Adrenal gland (tissue), 19 donors: ENCODE measurements at regions of chr11 and their contacts with region 1.

Region 1: DNA sequence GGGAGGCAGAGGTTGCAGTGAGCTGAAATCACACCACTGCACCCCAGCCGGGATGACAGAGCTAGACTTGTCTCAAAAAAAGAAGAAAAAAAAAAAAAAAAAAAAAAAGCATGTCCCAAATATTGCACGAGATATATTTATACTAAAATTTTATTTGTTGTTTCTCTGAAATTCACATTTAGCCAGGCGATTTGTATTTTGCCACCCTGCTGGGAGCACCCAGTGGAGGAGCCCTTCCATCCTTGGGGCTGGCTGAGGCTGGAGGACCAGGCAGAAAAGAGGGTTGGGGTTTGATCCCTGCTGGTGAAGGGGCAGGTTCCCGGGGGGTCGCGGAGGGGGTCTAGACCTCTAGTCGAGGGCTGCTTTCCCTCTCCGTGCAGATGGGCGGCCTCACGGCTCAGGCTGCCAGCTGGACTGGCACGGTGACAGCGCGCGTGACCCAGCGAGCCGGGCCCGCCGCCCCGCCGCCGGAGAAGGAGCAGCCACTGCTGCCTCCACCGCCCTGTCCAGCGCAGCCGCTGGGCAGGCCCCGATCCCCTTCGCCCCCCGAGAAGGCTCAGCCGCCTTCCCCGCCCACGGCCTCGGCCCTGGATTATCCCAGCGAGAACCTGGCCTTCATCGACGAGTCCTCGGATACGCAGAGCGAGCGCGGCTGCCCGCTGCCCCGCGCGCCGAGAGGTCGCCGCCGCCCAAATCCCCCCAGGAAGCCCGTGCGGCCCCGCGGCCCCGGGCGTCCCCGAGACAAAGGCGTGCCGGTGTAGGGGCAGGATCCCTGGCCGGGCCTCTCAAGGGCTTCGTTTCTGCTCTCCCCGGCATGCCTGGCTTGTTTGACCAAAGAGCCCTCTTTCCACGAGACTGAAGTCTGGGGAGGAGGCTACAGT is 952 bp upstream of the CATSPERZ start:
- DNase-seq: peak in 6 of 7 donors; percentile 62 to 75 (median 74)
- H3K4me3 ChIP-seq: peak overlapping the region in 2 of 4 donors; percentile 30 to 43
- H3K27ac ChIP-seq: no peak overlapping the region
- H3K4me1 ChIP-seq: peaks cover 23 to 30% of the 10 kb centered on the region in 2 donors
- H3K27me3 ChIP-seq: peaks cover 36% of the 10 kb centered on the region
- CTCF ChIP-seq: no peak
- POLR2A ChIP-seq: peak in 1 of 2 donors; percentile 8

Region 2: GRCh38 chr11:64000026-64000739 is 299.0 kb before region 1 on chr11:
- intact Hi-C with region 1: loop called in 1 of 2 experiments (anchors 10 kb)
- DNase-seq: peak; percentile 43 to 80 (median 69)
- H3K4me3 ChIP-seq: peak overlapping the region in 1 of 4 donors; percentile 39
- H3K27ac ChIP-seq: no peak overlapping the region
- H3K4me1 ChIP-seq: peaks cover 5 to 33% of the 10 kb centered on the region in 2 donors
- H3K27me3 ChIP-seq: no peaks in the 10 kb centered on the region
- CTCF ChIP-seq: peak; percentile 46 to 97 (median 68)
- POLR2A ChIP-seq: no peak

Region 3: GRCh38 chr11:64204464-64204989 is 94.7 kb before region 1 on chr11:
- intact Hi-C with region 1: loop called (anchors 2 to 5 kb)
- DNase-seq: peak; percentile 89 to 96 (median 93)
- H3K4me3 ChIP-seq: no peak overlapping the region
- H3K27ac ChIP-seq: peak overlapping the region in 3 of 5 donors; percentile 16 to 29 (median 21)
- H3K4me1 ChIP-seq: peaks cover 8 to 24% of the 10 kb centered on the region in 2 donors
- H3K27me3 ChIP-seq: no peaks in the 10 kb centered on the region
- CTCF ChIP-seq: peak; percentile 38 to 83 (median 78)
- POLR2A ChIP-seq: no peak